Astrocyte of the cerebellum (primary cell): ENCODE measurements at regions of chr17 and their contacts with region 1.

Region 1: DNA sequence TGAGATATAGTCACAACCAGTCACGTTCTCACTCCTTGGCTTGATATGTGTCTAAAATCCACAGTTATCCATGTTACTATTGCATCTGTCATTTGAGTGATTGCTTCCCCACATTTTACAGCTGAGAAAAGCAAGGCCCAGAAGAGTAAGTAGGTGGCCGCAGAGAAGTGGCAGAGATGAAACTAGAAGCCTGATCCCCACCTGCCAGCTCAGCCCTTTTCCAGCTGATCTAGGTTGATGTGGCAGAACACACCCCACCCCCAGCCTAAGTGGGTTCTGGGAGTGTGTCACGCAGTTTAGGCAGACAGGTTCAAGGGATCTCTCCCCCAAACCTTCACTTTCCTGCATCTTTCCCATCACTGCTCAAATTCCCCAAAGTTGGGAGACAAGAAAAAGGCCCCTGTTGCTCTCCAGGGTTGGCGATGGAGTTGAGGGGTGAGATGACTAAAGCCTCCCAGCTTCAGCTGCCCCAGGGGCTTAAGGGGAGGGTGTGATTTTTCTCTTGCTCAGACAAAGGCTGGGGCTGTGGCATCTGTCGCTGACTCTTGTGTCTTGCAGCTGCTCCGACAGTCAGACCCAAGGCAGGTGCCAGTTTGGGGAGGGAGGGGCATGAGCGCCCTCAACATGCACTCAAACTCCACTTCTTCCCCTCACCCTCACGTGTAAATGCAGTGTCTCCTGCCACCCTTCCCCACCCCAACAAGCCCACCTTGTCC is 48.9 kb upstream of the LHX1 start:
- DNase-seq: no peak
- H3K4me3 ChIP-seq: no peak overlapping the region
- CTCF ChIP-seq: no peak

Region 2: DNA sequence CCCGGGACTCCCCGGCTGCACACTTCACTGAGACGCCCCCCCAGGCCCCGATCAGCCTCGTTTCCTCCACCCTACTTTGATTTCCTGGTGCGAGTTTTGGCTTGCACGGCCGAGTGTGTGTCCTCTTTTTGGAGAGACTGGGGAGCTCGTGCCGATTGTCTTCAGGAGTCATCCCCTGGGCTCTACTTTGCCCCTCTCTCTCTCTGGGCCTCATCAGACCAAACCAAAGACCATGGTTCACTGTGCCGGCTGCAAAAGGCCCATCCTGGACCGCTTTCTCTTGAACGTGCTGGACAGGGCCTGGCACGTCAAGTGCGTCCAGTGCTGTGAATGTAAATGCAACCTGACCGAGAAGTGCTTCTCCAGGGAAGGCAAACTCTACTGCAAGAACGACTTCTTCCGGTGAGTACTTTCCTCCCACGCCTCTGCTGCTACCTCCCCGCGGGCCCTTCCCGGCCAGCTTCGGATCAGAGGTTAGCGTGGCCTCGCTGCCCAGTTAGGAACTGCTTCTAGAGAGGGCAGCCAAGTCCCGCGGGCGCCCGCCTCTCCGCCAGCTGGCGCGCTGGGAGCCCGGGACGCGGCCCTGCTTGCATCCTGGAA is 49.7 kb after region 1 on chr17:
- in situ Hi-C with region 1: loop called (anchors 5 kb)
- DNase-seq: no peak
- H3K4me3 ChIP-seq: no peak overlapping the region
- CTCF ChIP-seq: no peak

Region 3: DNA sequence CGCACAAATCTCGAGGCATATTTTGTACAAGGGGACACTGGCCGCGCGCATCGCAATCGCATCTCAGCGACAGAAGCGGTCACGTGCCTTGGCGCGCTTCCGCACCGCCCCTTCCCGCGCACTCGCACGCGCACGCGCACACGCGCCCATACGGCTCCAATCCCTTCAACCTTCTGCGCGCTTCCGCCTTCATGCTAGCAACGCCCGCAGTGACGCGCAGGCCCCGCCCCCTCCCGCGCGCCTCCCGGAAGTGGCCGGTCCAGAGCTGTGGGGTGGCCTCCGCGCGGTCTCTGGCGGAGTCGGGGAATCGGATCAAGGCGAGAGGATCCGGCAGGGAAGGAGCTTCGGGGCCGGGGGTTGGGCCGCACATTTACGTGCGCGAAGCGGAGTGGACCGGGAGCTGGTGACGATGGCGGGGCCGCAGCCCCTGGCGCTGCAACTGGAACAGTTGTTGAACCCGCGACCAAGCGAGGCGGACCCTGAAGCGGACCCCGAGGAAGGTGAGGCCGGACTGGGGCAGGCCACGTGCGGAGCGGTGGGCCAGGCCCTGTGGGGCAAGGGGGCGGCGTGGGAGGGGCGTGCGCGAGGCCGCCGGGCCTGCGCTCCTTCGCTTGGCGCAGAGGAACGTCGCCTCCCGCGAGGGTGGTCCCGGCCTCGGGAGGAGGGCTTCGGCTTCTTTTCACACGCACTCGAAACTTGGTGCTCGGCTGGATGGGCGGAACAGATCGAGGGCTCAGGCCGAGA is 60.5 kb after region 1 on chr17 and contains the start of gene AATF:
- in situ Hi-C with region 1: no loop called
- DNase-seq: peak; percentile 86
- H3K4me3 ChIP-seq: peak within 1 kb of the TSS; percentile 72
- CTCF ChIP-seq: no peak